ENCODE measurements at regions of chr1 and their contacts with region 1.

Region 1: GRCh38 chr1:54335755-54336108 is 70.5 kb downstream of the SSBP3 start:
- DNase-seq: peak; percentile 68 to 77
- ATAC-seq: peak; percentile 55 to 66
- H3K4me3 ChIP-seq: peak overlapping the region; percentile 27 to 39 (median 32)
- H3K27ac ChIP-seq: peak overlapping the region; percentile 96 to 97 (median 96)
- H3K4me1 ChIP-seq: peaks cover 93% of the 10 kb centered on the region in 2 donors
- H3K27me3 ChIP-seq: no peaks in the 10 kb centered on the region
- CTCF ChIP-seq: no peak
- POLR2A ChIP-seq: no peak

Region 2: GRCh38 chr1:54287176-54287650 is 48.5 kb before region 1 on chr1:
- in situ Hi-C with region 1: no loop called
- intact Hi-C with region 1: loop called (anchors 2 kb)
- DNase-seq: peak; percentile 58 to 88
- ATAC-seq: peak; percentile 73 to 82
- H3K4me3 ChIP-seq: peak overlapping the region; percentile 6 to 29 (median 18)
- H3K27ac ChIP-seq: peak overlapping the region; percentile 88 to 94 (median 92)
- H3K4me1 ChIP-seq: peaks cover 67 to 92% of the 10 kb centered on the region in 2 donors
- H3K27me3 ChIP-seq: no peaks in the 10 kb centered on the region
- CTCF ChIP-seq: no peak
- POLR2A ChIP-seq: no peak

Measured in gastrocnemius medialis (tissue), 4 donors.